ENCODE measurements at regions of chr22 and their contacts with region 1.

Region 1: DNA sequence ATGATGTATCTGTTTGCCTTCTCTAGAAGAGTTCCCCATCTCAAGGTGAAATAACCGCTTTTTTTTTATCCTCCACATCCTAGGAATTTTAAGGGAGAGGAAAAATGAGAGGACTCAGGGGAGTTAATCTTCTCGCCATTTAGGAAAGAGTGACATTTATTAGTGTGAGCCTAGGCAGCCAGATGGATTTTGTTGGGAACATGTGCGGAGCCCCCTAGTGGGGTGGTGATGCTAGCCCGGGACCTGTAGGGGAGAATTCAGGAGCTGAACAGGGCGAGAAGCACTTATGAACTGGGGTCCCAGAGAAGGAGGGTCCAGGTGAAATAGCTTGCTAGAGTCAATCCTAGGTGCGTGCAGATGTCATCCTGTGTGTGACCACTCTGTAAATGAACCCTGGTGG is 10.7 kb downstream of the IL17RA start:
- DNase-seq: peak; percentile 14
- H3K4me3 ChIP-seq: no peak overlapping the region
- H3K27ac ChIP-seq: no peak overlapping the region
- H3K4me1 ChIP-seq: no peaks in the 10 kb centered on the region
- H3K27me3 ChIP-seq: no peaks in the 10 kb centered on the region

Region 2: GRCh38 chr22:16912281-16912680 is 183.3 kb before region 1 on chr22:
- in situ Hi-C with region 1: no loop called
- DNase-seq: no peak
- H3K4me3 ChIP-seq: no peak overlapping the region
- H3K27ac ChIP-seq: no peak overlapping the region
- H3K4me1 ChIP-seq: peaks cover 18% of the 10 kb centered on the region
- H3K27me3 ChIP-seq: no peaks in the 10 kb centered on the region

Region 3: DNA sequence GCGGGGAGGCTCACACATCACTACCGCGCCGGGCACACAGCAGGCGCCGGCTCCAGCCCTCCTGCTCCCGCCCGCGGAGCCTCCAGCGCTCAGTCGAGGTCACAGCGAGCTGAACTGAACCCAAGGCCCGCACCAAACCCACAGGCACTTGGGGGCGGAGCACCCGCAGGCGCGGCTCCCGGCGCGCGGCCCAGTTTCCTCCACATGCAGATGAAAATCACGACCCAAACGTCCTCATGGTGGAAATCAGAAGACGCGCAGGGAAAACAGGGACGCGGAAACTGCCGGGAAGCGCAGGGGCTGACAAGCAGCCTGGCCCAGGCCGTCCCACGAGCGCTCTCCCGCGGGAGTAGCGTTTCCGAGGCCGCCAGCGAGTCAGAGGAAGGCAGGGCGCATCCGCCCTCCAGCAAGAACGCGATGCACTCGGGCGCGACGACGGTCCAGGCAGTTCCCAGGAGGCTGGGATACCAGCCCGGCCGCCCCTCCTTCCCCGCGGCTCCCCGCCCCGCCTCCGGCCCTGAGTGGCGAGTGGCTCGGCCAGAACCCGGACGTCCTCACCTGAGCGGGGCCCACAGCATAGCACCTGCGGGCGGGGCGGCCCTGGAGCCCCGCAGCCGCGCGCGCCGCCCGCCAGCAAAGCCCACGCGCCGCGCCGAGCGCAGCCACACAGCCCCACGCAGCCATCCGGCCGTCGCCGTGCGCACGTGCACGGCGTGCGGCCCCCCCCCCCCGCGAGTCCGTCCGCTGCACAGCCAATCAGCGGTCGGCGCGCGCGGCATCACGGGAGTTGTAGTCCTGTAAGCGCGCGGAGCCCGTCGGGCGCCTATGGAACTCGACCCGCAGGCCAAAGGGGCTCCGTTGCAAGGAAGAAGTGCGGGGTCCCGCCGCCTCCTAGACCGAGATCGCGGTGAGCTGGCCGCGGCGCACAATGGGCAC is 63.3 kb after region 1 on chr22 and contains the start of gene HDHD5:
- in situ Hi-C with region 1: loop called (anchors 10 kb)
- DNase-seq: peak; percentile 92
- H3K4me3 ChIP-seq: peak within 1 kb of the TSS; percentile 84
- H3K27ac ChIP-seq: peak within 1 kb of the TSS; percentile 58
- H3K4me1 ChIP-seq: peaks cover 11% of the 10 kb centered on the region
- H3K27me3 ChIP-seq: no peaks in the 10 kb centered on the region
- total RNA-seq, gene HDHD5: 53.2 and 53.7 TPM in 2 replicates